Calu3 (cell line): ENCODE measurements at regions of chr12 and their contacts with region 1.

Region 1: GRCh38 chr12:97250483-97250882 is 212.1 kb upstream of the RMST start:
- DNase-seq: no peak
- H3K4me3 Mint-ChIP-seq: no peak overlapping the region
- H3K27ac Mint-ChIP-seq: no peak overlapping the region
- H3K4me1 Mint-ChIP-seq: no peaks in the 10 kb centered on the region
- H3K27me3 Mint-ChIP-seq: peaks cover 14% of the 10 kb centered on the region
- CTCF ChIP-seq: no peak

Region 2: GRCh38 chr12:97211416-97211930 is 39.0 kb before region 1 on chr12:
- CTCF ChIA-PET with region 1: no interaction called
- intact Hi-C with region 1: no loop called
- DNase-seq: no peak
- H3K4me3 Mint-ChIP-seq: no peak overlapping the region
- H3K27ac Mint-ChIP-seq: no peak overlapping the region
- H3K4me1 Mint-ChIP-seq: no peaks in the 10 kb centered on the region
- H3K27me3 Mint-ChIP-seq: no peaks in the 10 kb centered on the region
- CTCF ChIP-seq: no peak

Region 3: DNA sequence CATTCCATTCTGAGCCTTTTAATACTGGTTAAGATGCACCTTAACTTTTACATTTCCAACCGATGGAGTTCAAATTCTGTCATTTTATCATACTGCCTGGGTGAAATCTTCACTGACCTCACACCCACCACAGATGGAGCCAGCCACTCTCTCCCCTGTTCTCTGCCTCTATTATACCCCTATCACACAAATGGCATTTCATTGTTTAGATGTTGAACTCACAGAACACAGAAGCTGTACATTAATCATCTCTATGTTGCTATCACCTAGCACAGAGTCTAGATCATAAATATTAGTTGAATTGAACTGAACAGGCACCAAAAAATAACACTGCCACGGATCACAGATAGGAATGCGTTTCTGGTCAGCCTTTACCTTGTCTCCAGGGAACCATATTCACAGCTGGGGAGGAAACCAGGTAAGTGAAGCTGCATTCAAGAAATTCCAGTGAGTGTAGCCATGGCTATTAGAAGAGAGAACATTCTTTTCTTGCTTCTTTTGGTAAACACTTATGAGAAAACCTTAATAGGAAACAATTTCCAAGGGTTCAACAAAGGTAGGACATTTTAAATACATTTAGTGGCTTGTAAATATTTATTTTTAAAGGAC is 17.2 kb after region 1 on chr12:
- CTCF ChIA-PET with region 1: no interaction called
- intact Hi-C with region 1: no loop called
- DNase-seq: no peak
- H3K4me3 Mint-ChIP-seq: no peak overlapping the region
- H3K27ac Mint-ChIP-seq: no peak overlapping the region
- H3K4me1 Mint-ChIP-seq: no peaks in the 10 kb centered on the region
- H3K27me3 Mint-ChIP-seq: peaks cover under 1% of the 10 kb centered on the region
- CTCF ChIP-seq: no peak

Region 4: DNA sequence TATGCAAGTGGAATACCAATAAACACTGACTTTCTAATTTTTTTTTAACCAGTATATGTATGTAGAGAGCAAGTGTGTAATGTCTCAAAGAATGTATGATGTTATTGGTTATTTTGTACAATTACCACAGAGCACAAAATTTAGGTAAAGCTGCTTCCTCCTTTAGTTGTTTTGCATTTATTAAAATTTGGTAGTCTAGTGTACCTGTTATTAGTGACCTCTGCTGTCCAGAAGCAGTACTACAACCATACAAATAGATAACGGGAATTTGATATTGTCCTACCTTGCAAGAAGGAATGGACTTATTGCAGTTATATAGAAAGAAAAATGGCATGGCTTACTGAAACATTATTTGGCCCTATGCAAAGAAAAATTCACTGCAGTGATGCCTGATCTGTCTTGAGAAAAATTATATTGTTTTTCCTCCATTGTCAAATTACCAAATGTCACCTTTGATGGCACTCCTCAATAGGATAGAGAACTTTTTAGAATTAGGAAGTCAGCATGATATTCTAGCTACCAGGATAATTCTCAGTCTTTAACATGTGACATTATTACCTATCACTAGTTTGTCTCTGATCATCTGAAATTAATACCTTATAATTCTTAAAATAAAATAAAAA is 58.2 kb after region 1 on chr12:
- CTCF ChIA-PET with region 1: no interaction called
- intact Hi-C with region 1: no loop called
- DNase-seq: peak; percentile 35
- H3K4me3 Mint-ChIP-seq: no peak overlapping the region
- H3K27ac Mint-ChIP-seq: no peak overlapping the region
- H3K4me1 Mint-ChIP-seq: peaks cover 8% of the 10 kb centered on the region
- H3K27me3 Mint-ChIP-seq: peaks cover 17% of the 10 kb centered on the region
- CTCF ChIP-seq: peak; percentile 64

Region 5: DNA sequence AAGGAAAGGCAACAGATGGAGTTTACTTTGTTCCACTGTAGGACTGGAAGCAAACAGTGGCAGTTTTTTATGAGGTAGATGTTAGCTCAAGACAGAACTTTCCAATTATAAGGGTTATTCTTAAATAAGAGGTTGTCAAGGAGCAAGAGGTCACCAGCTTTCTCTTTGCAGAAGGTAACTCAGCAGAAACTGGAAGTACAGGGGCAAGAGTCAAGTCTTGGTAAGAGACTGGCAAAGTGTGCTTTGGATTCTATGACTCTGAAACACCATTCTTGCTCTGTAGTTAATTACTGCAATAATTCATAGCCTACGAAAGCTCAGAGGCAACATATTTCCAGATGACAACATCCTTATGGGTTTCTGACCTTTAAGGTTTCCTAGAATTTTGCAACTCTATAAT is 263.4 kb after region 1 on chr12:
- CTCF ChIA-PET with region 1: no interaction called
- intact Hi-C with region 1: no loop called
- DNase-seq: no peak
- H3K4me3 Mint-ChIP-seq: no peak overlapping the region
- H3K27ac Mint-ChIP-seq: no peak overlapping the region
- H3K4me1 Mint-ChIP-seq: no peaks in the 10 kb centered on the region
- H3K27me3 Mint-ChIP-seq: no peaks in the 10 kb centered on the region
- CTCF ChIP-seq: no peak

Region 6: GRCh38 chr12:97530245-97530644 is 279.8 kb after region 1 on chr12:
- CTCF ChIA-PET with region 1: no interaction called
- intact Hi-C with region 1: loop called (anchors 5 kb)
- DNase-seq: no peak
- H3K4me3 Mint-ChIP-seq: no peak overlapping the region
- H3K27ac Mint-ChIP-seq: no peak overlapping the region
- H3K4me1 Mint-ChIP-seq: peaks cover 9% of the 10 kb centered on the region
- H3K27me3 Mint-ChIP-seq: no peaks in the 10 kb centered on the region
- CTCF ChIP-seq: no peak